ENCODE measurements at regions of chr3 and their contacts with region 1.

Region 1: GRCh38 chr3:4474683-4475490 is 7.8 kb upstream of the SUMF1 start:
- DNase-seq: peak in 1 of 2 donors; percentile 78
- ATAC-seq: peak; percentile 89
- H3K4me3 ChIP-seq: no peak overlapping the region
- H3K27ac ChIP-seq: peak overlapping the region; percentile 8 to 43
- H3K4me1 ChIP-seq: no peaks in the 10 kb centered on the region
- H3K27me3 ChIP-seq: no peaks in the 10 kb centered on the region

Region 2: GRCh38 chr3:4416961-4417360 is 57.9 kb before region 1 on chr3:
- intact Hi-C with region 1: loop called in 1 of 2 experiments (anchors 5 kb)
- DNase-seq: peak; percentile 92
- ATAC-seq: peak; percentile 86
- H3K4me3 ChIP-seq: no peak overlapping the region
- H3K27ac ChIP-seq: peak overlapping the region in 1 of 2 donors; percentile 64
- H3K4me1 ChIP-seq: peaks cover 0 to 6% of the 10 kb centered on the region in 2 donors
- H3K27me3 ChIP-seq: no peaks in the 10 kb centered on the region

Region 3: GRCh38 chr3:4426601-4427344 is 48.1 kb before region 1 on chr3:
- intact Hi-C with region 1: loop called in 1 of 2 experiments (anchors 5 kb)
- DNase-seq: no peak
- ATAC-seq: peak; percentile 63
- H3K4me3 ChIP-seq: no peak overlapping the region
- H3K27ac ChIP-seq: peak overlapping the region in 1 of 2 donors; percentile 5
- H3K4me1 ChIP-seq: peaks cover 2 to 13% of the 10 kb centered on the region in 2 donors
- H3K27me3 ChIP-seq: no peaks in the 10 kb centered on the region